HepG2 (cell line): ENCODE measurements at regions of chr14 and their contacts with region 1.

Region 1: GRCh38 chr14:94136575-94137331 is 7.3 kb upstream of the IFI27L2 start:
- DNase-seq: peak; percentile 80
- ATAC-seq: peak; percentile 93
- H3K4me3 ChIP-seq: peak overlapping the region in 2 of 3 experiments; percentile 19 to 48; a peak in 3 of 6 replicates
- H3K27ac ChIP-seq: no peak overlapping the region
- H3K4me1 ChIP-seq: peaks cover 27% of the 10 kb centered on the region
- H3K27me3 ChIP-seq: peaks cover 2 to 25% of the 10 kb centered on the region in 2 experiments; a peak in 4 of 5 replicates
- CTCF ChIP-seq: peak; percentile 98
- EP300 ChIP-seq: no peak
- POLR2A ChIP-seq: no peak
- RAD21 ChIP-seq: peak; percentile 95

Region 2: GRCh38 chr14:93959239-93960107 is 177.3 kb before region 1 on chr14:
- CTCF ChIA-PET with region 1: no interaction called
- POLR2A ChIA-PET with region 1: no interaction called
- in situ Hi-C with region 1: no loop called
- intact Hi-C with region 1: loop called (anchors 10 kb)
- DNase-seq: peak; percentile 98
- ATAC-seq: peak; percentile 92
- H3K4me3 ChIP-seq: peak overlapping the region in 1 of 3 experiments; percentile 44; a peak in 2 of 6 replicates
- H3K27ac ChIP-seq: peak overlapping the region; percentile 79
- H3K4me1 ChIP-seq: peaks cover 86% of the 10 kb centered on the region
- H3K27me3 ChIP-seq: no peaks in the 10 kb centered on the region
- CTCF ChIP-seq: peak; percentile 26; the same call in 1 of the 2 replicates
- EP300 ChIP-seq: peak; percentile 83 to 97; a peak in 3 of 4 replicates
- POLR2A ChIP-seq: peak; percentile 60 to 82
- RAD21 ChIP-seq: peak; percentile 20; the same call in 1 of the 2 replicates

Region 3: GRCh38 chr14:94051115-94051514 is 85.6 kb before region 1 on chr14:
- CTCF ChIA-PET with region 1: interaction called, 12 read pairs
- POLR2A ChIA-PET with region 1: no interaction called
- in situ Hi-C with region 1: no loop called
- intact Hi-C with region 1: loop called (anchors 1 kb)
- DNase-seq: no peak
- ATAC-seq: peak; percentile 39; the same call in 2 of the 3 replicates
- H3K4me3 ChIP-seq: no peak overlapping the region
- H3K27ac ChIP-seq: no peak overlapping the region
- H3K4me1 ChIP-seq: peaks cover 11% of the 10 kb centered on the region
- H3K27me3 ChIP-seq: no peaks in the 10 kb centered on the region
- CTCF ChIP-seq: peak; percentile 60
- EP300 ChIP-seq: no peak
- POLR2A ChIP-seq: no peak
- RAD21 ChIP-seq: no peak

Region 4: GRCh38 chr14:94307410-94307992 is 170.7 kb after region 1 on chr14:
- CTCF ChIA-PET with region 1: interaction called, 14 read pairs
- POLR2A ChIA-PET with region 1: interaction called, 3 read pairs
- in situ Hi-C with region 1: loop called (anchors 5 kb)
- intact Hi-C with region 1: loop called (anchors 1 kb)
- DNase-seq: peak; percentile 50
- ATAC-seq: peak; percentile 65
- H3K4me3 ChIP-seq: no peak overlapping the region
- H3K27ac ChIP-seq: no peak overlapping the region
- H3K4me1 ChIP-seq: peaks cover 18% of the 10 kb centered on the region
- H3K27me3 ChIP-seq: no peaks in the 10 kb centered on the region
- CTCF ChIP-seq: peak; percentile 88
- EP300 ChIP-seq: no peak
- POLR2A ChIP-seq: no peak
- RAD21 ChIP-seq: peak; percentile 80